Endothelial cell of umbilical vein (primary cell): ENCODE measurements at regions of chrX and their contacts with region 1.

Region 1: DNA sequence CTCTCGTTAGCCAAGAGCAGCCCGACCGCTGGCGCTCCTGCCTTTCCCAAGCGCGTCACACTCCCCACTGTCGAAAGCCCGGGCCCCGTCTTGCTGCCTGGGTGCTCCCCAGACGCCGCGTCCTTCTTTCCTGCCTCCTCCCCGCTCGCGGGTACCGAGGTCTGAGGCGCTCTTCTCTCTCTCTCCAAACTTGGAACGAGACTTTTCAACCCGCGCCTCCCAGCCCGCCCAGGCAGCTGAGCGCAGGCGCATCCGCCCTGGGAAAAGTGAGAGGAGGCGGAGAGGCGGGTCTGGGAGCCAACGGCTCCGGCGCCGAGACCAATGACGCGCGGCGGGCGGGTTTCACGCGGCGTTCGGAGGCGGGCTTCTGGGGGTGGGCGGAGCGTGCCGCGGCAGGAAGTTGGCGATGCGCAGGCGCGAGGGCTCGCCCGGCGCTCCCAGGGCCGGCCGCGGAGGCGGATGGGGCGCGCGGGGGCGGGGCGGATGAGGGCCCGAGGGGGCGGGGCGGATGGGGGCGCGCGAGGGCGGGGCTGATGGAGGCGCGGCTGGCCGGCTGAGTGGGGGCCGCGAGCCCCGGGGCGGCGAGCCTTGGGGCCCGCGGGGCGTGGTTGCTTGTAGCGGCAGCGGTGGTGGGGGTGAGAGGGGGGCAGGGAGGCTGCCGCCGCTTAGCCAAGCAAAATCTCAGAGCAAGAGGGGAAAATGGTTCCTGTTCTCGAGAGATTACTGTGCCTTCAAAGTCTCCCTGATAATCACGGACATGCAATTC is at the start of gene RBBP7:
- DNase-seq: peak; percentile 89
- H3K4me3 ChIP-seq: peak within 1 kb of the TSS; percentile 69 to 89 (median 86)
- H3K27ac ChIP-seq: peak within 1 kb of the TSS; percentile 81
- H3K4me1 ChIP-seq: peaks cover 17% of the 10 kb centered on the region
- H3K27me3 ChIP-seq: no peaks in the 10 kb centered on the region
- CTCF ChIP-seq: no peak
- POLR2A ChIP-seq: no peak
- total RNA-seq, gene RBBP7: 129 and 130 TPM in 2 replicates

Region 2: GRCh38 chrX:16573781-16574180 is 296.5 kb before region 1 on chrX:
- CTCF ChIA-PET with region 1: no interaction called
- POLR2A ChIA-PET with region 1: no interaction called
- dilution Hi-C with region 1: no loop called
- intact Hi-C with region 1: no loop called
- DNase-seq: no peak
- H3K4me3 ChIP-seq: no peak overlapping the region
- H3K27ac ChIP-seq: no peak overlapping the region
- H3K4me1 ChIP-seq: no peaks in the 10 kb centered on the region
- H3K27me3 ChIP-seq: no peaks in the 10 kb centered on the region
- CTCF ChIP-seq: no peak
- POLR2A ChIP-seq: no peak

Region 3: DNA sequence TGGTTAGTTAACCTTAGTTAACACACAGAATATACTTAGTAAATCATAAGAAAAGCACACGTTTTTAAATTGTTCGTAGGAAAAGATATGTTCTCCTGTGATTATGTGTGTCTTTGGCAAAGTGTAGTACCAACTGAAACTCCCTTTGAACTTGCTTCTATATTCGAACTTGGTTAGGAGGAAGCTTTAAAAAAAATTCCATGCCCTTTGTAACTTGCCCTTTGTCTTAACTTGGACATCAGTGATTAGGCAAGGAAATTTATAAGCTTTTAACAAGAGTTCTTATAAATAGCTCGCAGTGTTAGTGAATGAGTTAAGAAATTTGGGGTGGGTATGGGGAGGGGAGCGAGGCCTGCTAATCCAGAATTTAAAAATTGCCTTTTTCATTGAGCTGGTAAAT is 50.6 kb before region 1 on chrX:
- CTCF ChIA-PET with region 1: no interaction called
- POLR2A ChIA-PET with region 1: no interaction called
- dilution Hi-C with region 1: no loop called
- intact Hi-C with region 1: no loop called
- DNase-seq: no peak
- H3K4me3 ChIP-seq: no peak overlapping the region
- H3K27ac ChIP-seq: no peak overlapping the region
- H3K4me1 ChIP-seq: peaks cover 10% of the 10 kb centered on the region
- H3K27me3 ChIP-seq: no peaks in the 10 kb centered on the region
- CTCF ChIP-seq: no peak
- POLR2A ChIP-seq: no peak

Region 4: GRCh38 chrX:16838202-16839066 is 31.8 kb before region 1 on chrX:
- CTCF ChIA-PET with region 1: no interaction called
- POLR2A ChIA-PET with region 1: no interaction called
- dilution Hi-C with region 1: no loop called
- intact Hi-C with region 1: loop called (anchors 2 kb)
- DNase-seq: peak; percentile 85
- H3K4me3 ChIP-seq: no peak overlapping the region
- H3K27ac ChIP-seq: peak overlapping the region; percentile 84
- H3K4me1 ChIP-seq: peaks cover 20% of the 10 kb centered on the region
- H3K27me3 ChIP-seq: no peaks in the 10 kb centered on the region
- CTCF ChIP-seq: no peak
- POLR2A ChIP-seq: no peak